ENCODE measurements at regions of chr1 and their contacts with region 1.

Region 1: DNA sequence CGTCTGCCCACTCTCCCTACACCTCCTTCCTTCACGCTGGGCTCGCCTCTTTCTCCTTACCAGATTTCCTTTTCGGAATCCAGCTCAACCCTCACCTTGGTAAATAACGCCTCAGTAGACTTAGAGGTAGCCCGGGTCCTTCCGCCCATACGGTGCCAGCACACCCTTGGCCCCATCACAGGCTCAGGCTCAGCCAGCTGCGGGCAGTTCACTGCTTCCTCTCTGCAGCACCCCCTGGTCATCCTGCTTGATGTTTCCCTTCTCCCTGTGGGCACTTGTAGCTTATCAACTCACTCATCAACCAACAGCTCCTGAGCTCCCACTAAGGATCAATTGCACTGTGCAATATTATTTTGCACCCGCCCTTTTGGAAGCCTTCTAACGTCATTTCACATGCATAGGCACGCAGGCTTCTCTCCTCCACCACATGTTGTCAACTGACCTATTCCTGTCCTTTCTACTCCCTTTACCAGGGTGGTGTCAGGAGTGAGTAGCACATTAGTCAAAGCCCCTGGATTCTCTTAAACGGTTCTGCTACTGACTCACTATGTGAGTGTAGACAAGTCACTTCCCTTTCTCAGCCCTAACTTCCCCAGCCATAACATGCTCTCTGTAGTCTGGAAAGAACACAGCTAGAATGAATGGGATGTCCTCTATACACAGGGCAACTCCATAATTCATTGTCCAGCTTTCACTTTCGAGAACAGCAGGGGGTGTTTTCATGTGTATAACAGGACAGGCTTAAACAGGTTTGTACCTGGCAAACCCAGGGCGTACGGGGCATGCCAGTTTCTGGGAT is 47.1 kb upstream of the IRF2BP2 start:
- DNase-seq: no peak

Region 2: DNA sequence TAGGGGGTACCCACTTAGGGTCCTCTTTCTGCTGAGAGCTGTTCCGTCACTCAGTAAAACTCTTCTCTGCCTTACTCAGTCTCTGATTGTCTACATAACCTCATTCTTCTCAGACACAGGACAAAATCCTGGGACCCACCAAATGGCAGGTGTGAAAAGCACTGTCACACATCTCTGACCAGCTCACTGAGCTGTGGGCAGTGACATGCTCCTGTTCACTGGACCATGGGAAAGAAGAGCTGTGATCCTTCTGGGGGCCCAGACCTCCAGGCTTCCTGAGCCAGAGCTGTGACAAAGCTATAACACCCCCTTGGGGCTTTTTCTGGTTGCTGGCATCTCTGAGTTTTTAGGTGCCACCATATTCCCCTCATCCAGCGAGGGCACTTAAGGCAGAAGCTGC is 1591.0 kb before region 1 on chr1:
- intact Hi-C with region 1: no loop called
- DNase-seq: no peak

Region 3: GRCh38 chr1:234617131-234617985 is 39.7 kb before region 1 on chr1:
- intact Hi-C with region 1: loop called (anchors 5 kb)
- DNase-seq: no peak

Region 4: DNA sequence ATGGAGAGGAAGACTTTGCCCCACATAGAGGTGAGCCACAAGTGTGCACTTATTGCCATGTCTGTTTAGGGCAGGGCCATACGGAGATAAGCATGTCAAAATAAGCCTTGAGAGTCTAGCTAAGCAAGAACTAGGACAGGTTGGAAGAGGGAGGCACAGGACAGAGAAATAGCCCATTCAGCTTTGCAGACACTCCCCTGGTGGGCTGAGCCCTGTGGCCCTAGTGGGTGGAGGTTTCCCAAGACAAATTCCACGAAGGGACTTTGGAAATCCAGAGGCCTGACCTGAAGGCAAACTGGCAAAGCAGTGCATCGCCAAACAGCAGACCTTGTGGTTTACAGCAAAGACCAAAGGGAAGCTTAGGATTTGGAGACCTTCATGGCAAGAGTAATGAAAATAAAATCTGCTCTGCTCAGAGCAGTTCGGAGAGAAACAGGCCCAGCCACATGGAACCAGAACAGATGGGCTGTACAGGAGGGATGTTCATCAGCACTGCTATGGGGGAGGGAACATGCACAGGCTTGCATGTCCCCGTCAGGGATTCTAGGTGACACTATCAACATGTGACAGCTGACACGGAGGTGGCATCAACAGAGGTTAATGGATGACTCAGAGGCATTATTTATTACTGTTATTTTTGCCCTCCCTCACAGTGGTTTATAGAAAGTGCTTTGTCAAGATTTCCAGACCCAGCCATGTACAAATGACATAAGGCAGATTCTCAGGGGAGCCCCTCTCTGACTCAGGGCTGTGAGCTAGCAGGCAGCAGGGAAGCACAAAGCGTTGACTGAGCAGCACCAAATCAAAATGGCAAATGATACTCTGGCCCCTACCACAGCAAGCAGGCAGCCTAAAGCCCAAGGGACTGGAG is 43.0 kb after region 1 on chr1:
- intact Hi-C with region 1: loop called (anchors 5 kb)
- DNase-seq: no peak

Region 5: DNA sequence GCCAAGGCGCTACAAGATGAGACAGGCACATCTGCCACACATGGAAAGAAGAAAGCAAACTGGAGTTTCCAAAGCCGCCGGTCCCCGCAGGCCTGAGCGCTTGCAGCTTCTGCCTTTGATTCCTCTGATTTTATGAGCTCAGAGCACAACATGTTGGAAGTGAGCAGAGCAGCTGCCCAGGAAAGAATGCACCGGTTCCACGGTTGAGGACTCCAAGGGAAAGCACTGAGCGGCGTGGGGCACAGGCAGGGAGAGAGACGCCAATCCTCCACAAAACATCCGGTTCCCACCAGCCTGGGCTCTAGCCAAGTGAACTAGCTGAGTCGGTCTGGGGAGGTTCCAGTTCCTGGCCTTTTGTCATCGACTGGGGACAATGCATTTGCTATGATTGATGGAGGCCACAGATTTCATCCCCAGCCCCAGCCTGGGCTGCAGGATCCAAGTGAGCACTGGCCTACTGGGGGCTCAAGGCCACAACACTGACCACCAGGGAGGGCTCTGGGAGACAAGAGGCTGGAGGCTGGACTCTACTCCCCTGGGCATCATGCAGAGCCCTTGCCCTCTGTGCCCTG is 206.0 kb after region 1 on chr1:
- intact Hi-C with region 1: no loop called
- DNase-seq: peak; percentile 87